CD8-positive, alpha-beta T cell (primary cell): ENCODE measurements at regions of chr15 and their contacts with region 1.

Region 1: GRCh38 chr15:36275656-36276055 is 303.8 kb upstream of the CDIN1 start:
- DNase-seq: no peak
- ATAC-seq: no peak
- H3K4me3 ChIP-seq: no peak overlapping the region
- H3K4me3 Mint-ChIP-seq: no peak overlapping the region
- H3K27ac ChIP-seq: no peak overlapping the region
- H3K27ac Mint-ChIP-seq: no peak overlapping the region
- H3K4me1 ChIP-seq: no peaks in the 10 kb centered on the region
- H3K4me1 Mint-ChIP-seq: no peaks in the 10 kb centered on the region
- H3K27me3 ChIP-seq: no peaks in the 10 kb centered on the region
- H3K27me3 Mint-ChIP-seq: no peaks in the 10 kb centered on the region
- CTCF ChIP-seq: no peak

Region 2: GRCh38 chr15:36239509-36239908 is 36.1 kb before region 1 on chr15:
- CTCF ChIA-PET with region 1: no interaction called
- POLR2A ChIA-PET with region 1: no interaction called
- intact Hi-C with region 1: loop called in 1 of 2 experiments (anchors 2 kb)
- DNase-seq: no peak
- ATAC-seq: no peak
- H3K4me3 ChIP-seq: no peak overlapping the region
- H3K4me3 Mint-ChIP-seq: no peak overlapping the region
- H3K27ac ChIP-seq: no peak overlapping the region
- H3K27ac Mint-ChIP-seq: no peak overlapping the region
- H3K4me1 ChIP-seq: no peaks in the 10 kb centered on the region
- H3K4me1 Mint-ChIP-seq: no peaks in the 10 kb centered on the region
- H3K27me3 ChIP-seq: no peaks in the 10 kb centered on the region
- H3K27me3 Mint-ChIP-seq: no peaks in the 10 kb centered on the region
- CTCF ChIP-seq: no peak